ENCODE measurements at regions of chr21 and their contacts with region 1.

Region 1: GRCh38 chr21:14581902-14582457 is 35.9 kb upstream of the SAMSN1 start:
- DNase-seq: peak in 5 of 35 experiments; percentile 3 to 53 (median 8)
- ATAC-seq: peak; percentile 67 to 87 (median 86)
- H3K4me3 ChIP-seq: peak overlapping the region in 1 of 2 donors; percentile 6
- H3K4me3 Mint-ChIP-seq: peak overlapping the region; percentile 8 to 53 (median 41)
- H3K27ac ChIP-seq: peak overlapping the region; percentile 35
- H3K27ac Mint-ChIP-seq: peak overlapping the region; percentile 72 to 77
- H3K4me1 ChIP-seq: peaks cover 0 to 2% of the 10 kb centered on the region in 2 experiments
- H3K4me1 Mint-ChIP-seq: peaks cover 7 to 42% (median 18%) of the 10 kb centered on the region in 3 donors
- H3K27me3 ChIP-seq: no peaks in the 10 kb centered on the region
- H3K27me3 Mint-ChIP-seq: no peaks in the 10 kb centered on the region

Region 2: GRCh38 chr21:14645702-14646101 is 63.7 kb after region 1 on chr21:
- CTCF ChIA-PET with region 1: no interaction called
- POLR2A ChIA-PET with region 1: interaction called in 1 of 2 experiments, 13 read pairs
- DNase-seq: no peak
- ATAC-seq: no peak
- H3K4me3 ChIP-seq: no peak overlapping the region
- H3K4me3 Mint-ChIP-seq: no peak overlapping the region
- H3K27ac ChIP-seq: no peak overlapping the region
- H3K27ac Mint-ChIP-seq: no peak overlapping the region
- H3K4me1 ChIP-seq: no peaks in the 10 kb centered on the region
- H3K4me1 Mint-ChIP-seq: peaks cover 0 to 11% (median 2%) of the 10 kb centered on the region in 3 donors
- H3K27me3 ChIP-seq: no peaks in the 10 kb centered on the region
- H3K27me3 Mint-ChIP-seq: no peaks in the 10 kb centered on the region

Region 3: GRCh38 chr21:14675774-14676530 is 94.0 kb after region 1 on chr21:
- CTCF ChIA-PET with region 1: no interaction called
- POLR2A ChIA-PET with region 1: interaction called in 1 of 2 experiments, 11 read pairs
- DNase-seq: peak in 30 of 35 experiments; percentile 0 to 70 (median 10)
- ATAC-seq: peak; percentile 93 to 95 (median 94)
- H3K4me3 ChIP-seq: peak overlapping the region; percentile 5 to 13
- H3K4me3 Mint-ChIP-seq: peak overlapping the region; percentile 51 to 76 (median 59)
- H3K27ac ChIP-seq: peak overlapping the region; percentile 95
- H3K27ac Mint-ChIP-seq: peak overlapping the region; percentile 98 to 100
- H3K4me1 ChIP-seq: peaks cover 16 to 27% of the 10 kb centered on the region in 2 experiments
- H3K4me1 Mint-ChIP-seq: peaks cover 49 to 59% (median 56%) of the 10 kb centered on the region in 3 donors
- H3K27me3 ChIP-seq: no peaks in the 10 kb centered on the region
- H3K27me3 Mint-ChIP-seq: no peaks in the 10 kb centered on the region

Region 4: GRCh38 chr21:15255763-15256465 is 673.9 kb after region 1 on chr21:
- CTCF ChIA-PET with region 1: no interaction called
- POLR2A ChIA-PET with region 1: no interaction called
- DNase-seq: no peak
- ATAC-seq: no peak
- H3K4me3 ChIP-seq: no peak overlapping the region
- H3K4me3 Mint-ChIP-seq: no peak overlapping the region
- H3K27ac ChIP-seq: no peak overlapping the region
- H3K27ac Mint-ChIP-seq: no peak overlapping the region
- H3K4me1 ChIP-seq: no peaks in the 10 kb centered on the region
- H3K4me1 Mint-ChIP-seq: peaks cover 0 to 7% (median 2%) of the 10 kb centered on the region in 3 donors
- H3K27me3 ChIP-seq: no peaks in the 10 kb centered on the region
- H3K27me3 Mint-ChIP-seq: peaks cover 0 to 8% of the 10 kb centered on the region in 2 donors